Left colon (tissue), 2 donors: ENCODE measurements at regions of chr21 and their contacts with region 1.

Region 1: GRCh38 chr21:22120616-22121266 is 1122.5 kb downstream of the NCAM2 start:
- DNase-seq: no peak
- ATAC-seq: no peak

Region 2: GRCh38 chr21:20802631-20803260 is 1318.0 kb before region 1 on chr21:
- intact Hi-C with region 1: loop called in 1 of 2 experiments (anchors 10 kb)
- DNase-seq: no peak
- ATAC-seq: no peak

Region 3: DNA sequence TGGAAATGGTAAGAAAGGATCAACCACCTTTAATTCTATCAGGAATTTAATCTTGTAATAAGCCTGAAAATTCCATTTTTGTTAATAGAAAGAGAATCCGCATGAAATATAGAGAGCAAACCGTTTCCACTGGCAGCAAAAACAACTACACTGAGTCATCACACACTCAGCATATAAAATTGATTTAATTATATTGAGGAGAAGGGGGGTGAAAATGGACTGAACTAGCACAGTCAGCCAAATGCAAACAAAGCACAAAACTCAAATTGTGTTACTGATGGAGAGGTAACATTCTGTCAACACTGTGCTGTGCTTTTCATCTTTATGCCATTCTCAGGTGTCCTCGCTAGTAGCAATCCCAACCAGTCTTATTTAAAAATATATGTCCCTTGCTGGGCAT is 1902.7 kb after region 1 on chr21:
- intact Hi-C with region 1: no loop called
- DNase-seq: no peak
- ATAC-seq: no peak